GM12878 (cell line): ENCODE measurements at regions of chr20 and their contacts with region 1.

Region 1: DNA sequence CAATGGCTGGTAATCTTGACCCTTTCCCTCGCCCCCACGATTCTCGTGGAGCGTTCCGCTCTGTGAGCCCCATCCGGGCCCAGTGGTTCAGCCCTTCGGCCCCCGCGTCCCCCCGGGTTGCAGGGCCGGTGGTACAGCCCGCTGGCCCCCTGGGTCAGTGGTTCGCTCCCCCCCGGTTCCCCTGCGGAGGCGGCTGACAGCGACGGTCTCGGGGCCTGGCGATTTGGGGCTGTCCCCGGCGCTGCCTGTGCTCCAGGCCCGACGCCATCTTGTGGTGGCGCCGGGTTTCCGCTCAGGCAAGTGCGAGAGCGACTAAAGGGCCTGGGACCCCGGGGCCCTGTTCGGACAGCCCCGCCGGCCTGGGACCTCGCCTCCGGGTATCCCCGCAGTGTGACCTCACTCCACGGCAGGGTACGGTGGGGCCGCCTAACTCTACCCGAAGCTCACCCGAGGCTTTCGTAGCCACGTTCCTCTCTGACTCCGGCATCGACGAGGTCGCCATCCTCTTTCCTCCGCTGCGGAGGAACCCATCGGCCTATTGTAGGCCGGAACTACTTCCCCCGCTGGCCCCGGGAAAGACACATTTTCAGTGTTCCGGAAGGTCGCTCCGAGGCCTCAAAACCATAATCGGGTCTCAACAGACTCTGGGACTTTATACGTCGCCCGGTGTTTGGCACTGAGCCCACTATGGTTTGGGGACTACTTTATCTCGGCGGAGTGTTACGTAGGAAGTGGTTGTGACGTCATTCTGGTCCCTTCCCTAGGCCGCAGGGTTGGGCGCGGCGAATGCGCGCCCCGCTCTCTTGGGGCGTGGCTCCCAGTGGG is at the start of gene ZNF335:
- DNase-seq: peak; percentile 86
- ATAC-seq: peak; percentile 78
- H3K4me3 ChIP-seq: peak within 1 kb of the TSS; percentile 81
- H3K27ac ChIP-seq: peak within 1 kb of the TSS; percentile 97
- H3K4me1 ChIP-seq: peaks cover 5% of the 10 kb centered on the region
- H3K27me3 ChIP-seq: no peaks in the 10 kb centered on the region
- CTCF ChIP-seq: peak in 1 of 3 experiments; percentile 27; a peak in 1 of 6 replicates
- EP300 ChIP-seq: peak; percentile 13 to 58; a peak in 3 of 4 replicates
- POLR2A ChIP-seq: peak; percentile 88
- RAD21 ChIP-seq: no peak
- polyA plus RNA-seq, gene ZNF335: 0.74 to 1.2 TPM

Region 2: DNA sequence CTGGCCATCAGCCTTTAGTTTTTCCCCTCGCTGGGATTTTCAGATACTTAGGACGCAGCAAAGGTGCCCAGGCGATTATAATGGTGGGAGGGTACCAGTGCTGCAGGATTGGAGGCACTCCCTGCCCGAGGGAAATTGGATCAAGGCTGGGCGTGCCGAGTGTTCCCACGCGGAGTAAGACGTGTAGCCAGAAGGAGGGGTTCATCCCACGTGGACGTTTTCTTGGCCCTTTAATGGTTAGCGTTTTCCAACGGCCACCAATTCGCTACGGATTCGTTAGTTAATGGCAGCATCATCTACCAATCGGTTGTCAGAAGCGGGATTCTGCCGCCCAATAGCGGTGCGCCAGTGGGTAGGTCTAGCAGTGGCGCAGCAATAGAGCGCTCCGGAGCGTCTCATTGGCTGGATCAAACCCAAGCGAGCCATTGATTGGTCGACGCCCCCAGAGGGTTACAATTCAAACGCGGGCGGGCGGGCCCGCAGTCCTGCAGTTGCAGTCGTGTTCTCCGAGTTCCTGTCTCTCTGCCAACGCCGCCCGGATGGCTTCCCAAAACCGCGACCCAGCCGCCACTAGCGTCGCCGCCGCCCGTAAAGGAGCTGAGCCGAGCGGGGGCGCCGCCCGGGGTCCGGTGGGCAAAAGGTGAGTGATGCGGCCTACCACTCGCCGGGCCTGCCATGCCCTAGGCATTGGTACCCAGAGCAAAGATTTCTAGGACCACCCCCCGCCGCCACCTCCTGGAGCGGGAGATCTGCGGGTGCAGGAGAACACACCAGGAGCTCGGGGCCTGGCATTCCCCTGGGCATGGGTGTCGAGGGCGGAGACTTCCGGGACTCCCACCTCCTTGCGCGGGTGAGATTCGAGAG is 159.5 kb before region 1 on chr20 and contains the start of gene UBE2C:
- CTCF ChIA-PET with region 1: interaction called, 18 read pairs
- POLR2A ChIA-PET with region 1: interaction called, 4 read pairs
- RAD21 ChIA-PET with region 1: interaction called, 6 read pairs
- SMC1A ChIA-PET with region 1: interaction called, 6 read pairs
- in situ Hi-C with region 1: no loop called
- intact Hi-C with region 1: no loop called
- DNase-seq: peak; percentile 98
- ATAC-seq: peak; percentile 100
- H3K4me3 ChIP-seq: peak within 1 kb of the TSS; percentile 85
- H3K27ac ChIP-seq: peak within 1 kb of the TSS; percentile 93
- H3K4me1 ChIP-seq: no peaks in the 10 kb centered on the region
- H3K27me3 ChIP-seq: no peaks in the 10 kb centered on the region
- CTCF ChIP-seq: no peak
- EP300 ChIP-seq: no peak
- POLR2A ChIP-seq: peak; percentile 88
- RAD21 ChIP-seq: no peak
- polyA plus RNA-seq, gene UBE2C: 86.2 to 140 TPM

Region 3: GRCh38 chr20:45867819-45868176 is 104.1 kb before region 1 on chr20:
- CTCF ChIA-PET with region 1: no interaction called
- POLR2A ChIA-PET with region 1: no interaction called
- RAD21 ChIA-PET with region 1: no interaction called
- SMC1A ChIA-PET with region 1: no interaction called
- in situ Hi-C with region 1: no loop called
- intact Hi-C with region 1: no loop called
- DNase-seq: no peak
- ATAC-seq: no peak
- H3K4me3 ChIP-seq: no peak overlapping the region
- H3K27ac ChIP-seq: no peak overlapping the region
- H3K4me1 ChIP-seq: no peaks in the 10 kb centered on the region
- H3K27me3 ChIP-seq: no peaks in the 10 kb centered on the region
- CTCF ChIP-seq: no peak
- EP300 ChIP-seq: no peak
- POLR2A ChIP-seq: no peak
- RAD21 ChIP-seq: no peak

Region 4: DNA sequence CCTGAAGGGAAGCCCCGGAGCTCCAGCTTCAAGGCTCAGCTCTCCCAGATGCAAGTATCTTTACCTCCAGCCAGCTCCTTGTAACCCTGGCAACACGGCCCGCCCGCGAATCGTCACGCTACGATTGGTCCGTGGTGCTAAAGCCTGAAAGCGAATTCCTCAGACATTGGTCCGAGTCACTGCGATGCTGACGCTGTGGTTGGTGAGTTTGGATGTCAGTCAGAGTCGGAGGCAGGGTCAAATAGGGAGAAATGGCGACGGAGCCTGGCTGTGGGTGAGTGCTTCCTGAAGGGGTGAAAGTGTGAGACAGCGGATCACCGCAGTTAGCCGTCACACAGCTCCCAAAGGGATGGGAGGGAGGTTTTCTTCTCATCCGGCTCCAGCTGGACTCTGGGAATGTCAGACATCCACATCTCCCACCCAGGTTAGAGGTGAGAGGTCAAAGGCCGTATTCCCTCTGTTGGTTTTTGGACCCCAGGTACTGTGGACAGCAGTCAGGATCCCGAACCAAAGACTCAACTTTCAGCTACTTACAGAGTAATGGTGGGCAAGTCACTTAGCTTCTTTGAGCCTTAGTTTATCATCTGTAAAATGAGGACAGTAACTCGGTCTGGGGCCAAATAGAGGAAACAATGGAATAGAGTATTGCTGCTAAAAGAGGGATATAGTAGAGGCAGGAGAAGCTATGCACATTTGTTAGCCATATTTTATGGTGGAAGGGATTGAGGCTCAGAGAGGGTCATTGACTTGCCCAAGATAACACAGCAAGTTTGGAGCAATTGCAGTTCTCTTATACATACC is 90.7 kb before region 1 on chr20 and contains the start of gene ZSWIM1:
- CTCF ChIA-PET with region 1: interaction called, 18 read pairs
- POLR2A ChIA-PET with region 1: interaction called, 3 read pairs
- RAD21 ChIA-PET with region 1: no interaction called
- SMC1A ChIA-PET with region 1: interaction called, 5 read pairs
- in situ Hi-C with region 1: no loop called
- intact Hi-C with region 1: no loop called
- DNase-seq: peak; percentile 99
- ATAC-seq: peak; percentile 100
- H3K4me3 ChIP-seq: peak within 1 kb of the TSS; percentile 84
- H3K27ac ChIP-seq: peak within 1 kb of the TSS; percentile 73
- H3K4me1 ChIP-seq: peaks cover 12% of the 10 kb centered on the region
- H3K27me3 ChIP-seq: no peaks in the 10 kb centered on the region
- CTCF ChIP-seq: no peak
- EP300 ChIP-seq: no peak
- POLR2A ChIP-seq: peak; percentile 98
- RAD21 ChIP-seq: no peak
- polyA plus RNA-seq, gene ZSWIM1: 2.4 to 2.5 TPM

Region 5: DNA sequence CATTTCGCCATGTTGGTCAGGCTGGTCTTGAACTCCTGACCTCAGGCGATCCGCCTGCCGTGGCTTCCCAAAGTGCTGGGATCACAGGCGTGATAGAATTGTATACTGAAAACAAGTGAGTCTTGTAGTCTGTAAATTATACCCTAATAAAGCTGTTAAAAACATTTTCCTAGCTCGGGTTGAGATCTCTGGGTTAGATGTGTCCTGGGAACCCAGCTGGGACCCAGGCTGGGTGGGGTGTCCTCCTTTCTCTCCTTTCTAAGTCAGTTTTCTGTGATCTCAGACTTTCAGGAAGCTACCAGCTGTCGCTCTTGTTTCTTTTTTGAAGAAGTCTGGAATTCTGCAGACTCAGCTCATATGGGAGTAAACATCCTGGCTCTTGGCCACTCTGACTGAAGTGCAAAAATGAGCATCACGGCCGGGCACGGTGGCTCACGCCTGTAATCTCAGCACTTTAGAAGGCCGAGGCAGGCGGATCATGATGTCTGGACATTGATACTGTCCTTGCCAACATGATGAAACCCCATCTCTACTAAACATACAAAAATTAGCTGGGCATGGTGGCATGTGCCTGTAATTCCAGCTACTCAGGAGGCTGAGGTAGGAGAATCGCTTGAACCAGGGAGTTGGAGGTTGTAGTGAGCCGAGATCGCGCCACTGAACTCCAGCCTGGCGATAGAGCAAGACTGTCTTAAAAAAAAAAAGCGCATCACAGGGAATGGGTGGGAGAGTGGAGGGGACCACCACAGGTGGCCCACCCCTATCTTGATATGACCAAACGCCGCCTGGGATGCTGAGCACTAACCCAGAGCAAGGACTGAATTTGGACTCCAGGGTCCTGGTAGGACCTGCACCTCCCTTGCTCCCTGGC is 47.3 kb before region 1 on chr20:
- CTCF ChIA-PET with region 1: interaction called, 12 read pairs
- POLR2A ChIA-PET with region 1: no interaction called
- RAD21 ChIA-PET with region 1: no interaction called
- SMC1A ChIA-PET with region 1: no interaction called
- in situ Hi-C with region 1: no loop called
- intact Hi-C with region 1: no loop called
- DNase-seq: no peak
- ATAC-seq: no peak
- H3K4me3 ChIP-seq: no peak overlapping the region
- H3K27ac ChIP-seq: no peak overlapping the region
- H3K4me1 ChIP-seq: no peaks in the 10 kb centered on the region
- H3K27me3 ChIP-seq: no peaks in the 10 kb centered on the region
- CTCF ChIP-seq: no peak
- EP300 ChIP-seq: no peak
- POLR2A ChIP-seq: no peak
- RAD21 ChIP-seq: no peak

Region 6: DNA sequence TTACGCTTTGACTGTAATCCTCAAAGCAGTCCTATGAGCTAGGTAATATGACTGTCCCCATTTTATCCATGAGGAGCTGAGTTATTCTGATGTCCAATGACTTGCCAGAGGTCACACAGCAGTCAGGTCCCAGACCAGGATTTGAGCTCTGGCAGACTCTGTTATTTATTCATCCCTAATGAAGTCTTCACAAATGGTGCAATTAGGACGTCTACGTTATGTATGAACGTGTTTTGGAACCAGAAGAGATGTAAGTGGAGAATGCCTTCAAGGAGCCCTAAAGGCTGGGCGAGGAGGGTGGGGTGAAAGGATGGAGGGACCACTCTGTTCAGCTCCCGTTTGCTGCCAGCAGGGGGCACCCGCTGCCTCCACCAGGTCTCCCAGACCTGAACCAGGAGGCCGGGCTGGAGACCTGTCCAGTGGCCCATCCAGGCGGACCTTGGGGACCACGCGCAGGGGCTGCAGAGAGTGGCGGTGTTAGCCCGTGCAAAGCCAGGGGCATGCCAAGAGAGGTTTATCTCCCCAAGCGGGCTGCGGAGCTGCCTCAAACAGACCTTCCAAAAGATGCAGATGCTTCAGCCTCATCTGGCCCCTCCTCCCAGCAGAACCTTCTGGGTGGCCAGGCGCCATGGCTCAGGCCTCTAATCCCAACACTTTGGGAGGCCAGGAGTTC is 15.4 kb after region 1 on chr20:
- CTCF ChIA-PET with region 1: interaction called, 151 read pairs
- POLR2A ChIA-PET with region 1: interaction called, 3 read pairs
- RAD21 ChIA-PET with region 1: interaction called, 20 read pairs
- SMC1A ChIA-PET with region 1: interaction called, 14 read pairs
- in situ Hi-C with region 1: no loop called
- intact Hi-C with region 1: no loop called
- DNase-seq: no peak
- ATAC-seq: peak; percentile 100
- H3K4me3 ChIP-seq: no peak overlapping the region
- H3K27ac ChIP-seq: no peak overlapping the region
- H3K4me1 ChIP-seq: peaks cover 6% of the 10 kb centered on the region
- H3K27me3 ChIP-seq: no peaks in the 10 kb centered on the region; a peak in 1 of 4 replicates
- CTCF ChIP-seq: peak; percentile 92 to 96 (median 93)
- EP300 ChIP-seq: no peak
- POLR2A ChIP-seq: no peak
- RAD21 ChIP-seq: peak; percentile 83

Region 7: GRCh38 chr20:46089417-46090388 is 117.8 kb after region 1 on chr20 and contains the start of gene NCOA5:
- CTCF ChIA-PET with region 1: interaction called, 10 read pairs
- POLR2A ChIA-PET with region 1: no interaction called
- RAD21 ChIA-PET with region 1: no interaction called
- SMC1A ChIA-PET with region 1: interaction called, 6 read pairs
- in situ Hi-C with region 1: no loop called
- intact Hi-C with region 1: loop called (anchors 5 kb)
- DNase-seq: peak; percentile 84
- ATAC-seq: peak; percentile 91
- H3K4me3 ChIP-seq: peak within 1 kb of the TSS; percentile 80
- H3K27ac ChIP-seq: peak within 1 kb of the TSS; percentile 94
- H3K4me1 ChIP-seq: peaks cover 3% of the 10 kb centered on the region; the same call in 1 of the 2 replicates
- H3K27me3 ChIP-seq: no peaks in the 10 kb centered on the region
- CTCF ChIP-seq: peak; percentile 16 to 49 (median 19); a peak in 3 of 6 replicates
- EP300 ChIP-seq: no peak
- POLR2A ChIP-seq: peak; percentile 96
- RAD21 ChIP-seq: peak; percentile 25; the same call in 1 of the 2 replicates
- polyA plus RNA-seq, gene NCOA5: 7.7 to 8.8 TPM

Region 8: GRCh38 chr20:46253391-46253790 is 281.5 kb after region 1 on chr20:
- CTCF ChIA-PET with region 1: no interaction called
- POLR2A ChIA-PET with region 1: no interaction called
- RAD21 ChIA-PET with region 1: no interaction called
- SMC1A ChIA-PET with region 1: no interaction called
- in situ Hi-C with region 1: no loop called
- intact Hi-C with region 1: no loop called
- DNase-seq: no peak
- ATAC-seq: no peak
- H3K4me3 ChIP-seq: no peak overlapping the region
- H3K27ac ChIP-seq: no peak overlapping the region
- H3K4me1 ChIP-seq: no peaks in the 10 kb centered on the region
- H3K27me3 ChIP-seq: peaks cover 0 to 9% of the 10 kb centered on the region in 2 experiments; a peak in 3 of 4 replicates
- CTCF ChIP-seq: no peak; a peak in 1 of 6 replicates
- EP300 ChIP-seq: no peak
- POLR2A ChIP-seq: no peak
- RAD21 ChIP-seq: no peak